ENCODE measurements at regions of chr15 and their contacts with region 1.

Region 1: DNA sequence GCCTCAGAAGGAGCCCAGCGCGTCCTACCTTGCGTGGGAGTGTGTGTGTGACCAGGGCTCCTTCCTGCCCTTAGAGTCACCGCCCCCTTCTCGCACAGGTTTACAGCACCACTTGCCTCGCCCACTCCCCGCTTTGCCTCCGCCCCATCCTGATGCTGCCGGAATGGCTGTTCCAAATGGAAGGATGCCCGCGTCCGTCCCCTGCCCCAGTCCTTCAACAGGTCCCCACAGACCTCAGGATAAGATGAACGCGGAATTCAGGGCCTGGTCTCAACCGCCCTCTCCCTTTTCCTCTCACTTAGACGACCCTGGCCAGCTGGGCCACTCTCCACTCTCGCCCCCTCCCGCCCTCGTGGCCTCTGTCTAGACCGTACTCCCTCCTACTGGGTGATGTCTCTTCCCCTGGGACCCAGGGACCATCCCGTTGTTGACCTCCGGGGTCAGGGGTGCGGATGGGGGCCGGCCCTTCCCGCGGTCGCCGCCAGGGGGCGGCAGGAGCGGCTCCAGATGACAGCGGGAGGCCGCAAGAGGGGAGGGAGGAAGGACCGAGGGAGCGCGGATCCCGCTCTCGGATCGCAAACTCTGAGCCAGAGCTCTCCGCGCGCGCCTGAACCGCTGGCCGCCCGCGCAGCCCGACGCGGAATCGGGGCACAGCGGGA is at the start of gene THSD4:
- DNase-seq: peak; percentile 73 to 89 (median 89)
- ATAC-seq: peak; percentile 70 to 75
- H3K4me3 ChIP-seq: peak within 1 kb of the TSS; percentile 81
- H3K27ac ChIP-seq: peak within 1 kb of the TSS; percentile 92
- H3K4me1 ChIP-seq: no peaks in the 10 kb centered on the region
- H3K27me3 ChIP-seq: no peaks in the 10 kb centered on the region
- total RNA-seq, gene THSD4: 63.6 to 93.8 (median 73.8) TPM

Region 2: DNA sequence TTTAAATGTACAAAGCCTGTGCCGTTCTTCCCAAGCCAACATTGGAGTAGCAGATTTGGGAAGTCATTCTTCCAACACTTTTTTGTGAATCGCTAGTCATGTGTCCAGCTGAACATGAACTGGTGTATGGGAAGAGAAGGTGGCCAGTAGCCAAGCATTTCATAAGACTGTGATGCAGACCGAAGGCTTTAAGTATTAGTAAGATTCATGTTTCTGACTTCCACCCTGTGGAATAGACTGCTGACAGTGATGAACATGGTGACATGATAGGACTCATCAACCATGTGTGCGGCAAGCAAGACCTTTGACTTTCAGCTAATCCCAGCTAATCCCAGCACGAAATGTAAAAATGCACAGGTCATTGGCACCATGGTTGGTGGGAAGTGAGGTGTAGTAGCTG is 48.0 kb before region 1 on chr15:
- intact Hi-C with region 1: no loop called
- DNase-seq: peak in 1 of 3 donors; percentile 22
- ATAC-seq: peak; percentile 55 to 56
- H3K4me3 ChIP-seq: no peak overlapping the region
- H3K27ac ChIP-seq: no peak overlapping the region
- H3K4me1 ChIP-seq: no peaks in the 10 kb centered on the region
- H3K27me3 ChIP-seq: no peaks in the 10 kb centered on the region

Region 3: DNA sequence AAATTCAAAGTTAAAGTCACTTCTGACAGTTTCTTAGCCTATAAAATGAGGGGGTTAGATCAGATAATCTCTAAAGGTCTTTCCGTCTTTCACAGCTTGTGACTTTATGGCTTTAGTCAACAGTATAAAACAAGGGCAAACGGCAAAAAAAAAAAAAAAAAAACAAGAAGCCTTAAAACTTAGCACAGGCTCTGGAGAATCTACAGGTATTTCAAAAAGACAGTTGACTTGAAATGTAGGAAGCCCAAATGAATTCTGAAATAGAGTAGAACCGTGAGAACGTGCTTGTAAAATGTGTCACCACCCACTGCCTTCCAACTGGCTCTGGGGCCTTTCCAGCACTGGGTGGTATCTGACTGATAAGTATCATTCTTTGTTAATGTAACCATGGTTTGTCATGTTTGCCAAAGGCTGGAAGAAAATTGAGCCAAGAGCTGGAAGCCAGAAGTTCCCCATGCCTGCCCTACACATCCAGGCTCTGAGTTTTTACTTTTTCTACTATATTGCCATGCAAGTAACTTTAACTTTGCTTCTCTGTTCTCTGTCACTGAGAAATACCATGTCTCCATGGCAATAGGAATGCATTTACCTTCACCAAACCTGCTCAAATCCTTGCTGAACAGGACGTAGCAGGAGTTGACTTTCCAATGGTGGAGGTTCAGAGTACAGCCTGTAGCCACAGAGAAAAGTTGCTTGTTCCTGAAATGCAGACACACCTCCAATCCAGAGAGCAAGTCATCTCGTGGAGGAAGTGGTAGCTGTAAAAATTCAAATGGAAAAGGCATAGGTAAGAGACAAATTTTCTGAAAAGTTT is 35.6 kb before region 1 on chr15:
- intact Hi-C with region 1: no loop called
- DNase-seq: peak; percentile 33 to 75 (median 55)
- ATAC-seq: peak; percentile 38 to 53
- H3K4me3 ChIP-seq: no peak overlapping the region
- H3K27ac ChIP-seq: no peak overlapping the region
- H3K4me1 ChIP-seq: no peaks in the 10 kb centered on the region
- H3K27me3 ChIP-seq: no peaks in the 10 kb centered on the region

Region 4: DNA sequence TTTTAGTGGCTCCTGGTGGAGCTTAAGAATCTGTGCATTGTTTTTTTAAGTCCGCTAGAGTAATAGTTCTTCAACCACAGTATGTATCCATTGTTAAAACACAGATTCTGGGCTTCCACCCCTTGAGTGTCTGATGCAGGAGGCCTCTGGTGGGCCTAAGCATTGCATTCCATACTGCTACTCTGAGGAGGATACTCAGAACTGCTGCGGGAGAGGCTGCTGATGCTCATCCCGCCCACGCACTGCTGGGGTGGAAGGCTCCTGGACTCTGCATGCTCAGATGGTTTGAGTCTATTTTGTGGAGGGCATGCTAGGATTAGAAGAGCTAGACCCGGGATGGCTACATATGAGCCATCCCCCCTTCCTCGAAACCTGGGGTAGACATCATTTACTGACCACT is 74.7 kb after region 1 on chr15:
- intact Hi-C with region 1: loop called in 1 of 4 experiments (anchors 10 kb)
- DNase-seq: no peak
- ATAC-seq: no peak
- H3K4me3 ChIP-seq: no peak overlapping the region
- H3K27ac ChIP-seq: no peak overlapping the region
- H3K4me1 ChIP-seq: no peaks in the 10 kb centered on the region
- H3K27me3 ChIP-seq: no peaks in the 10 kb centered on the region

Region 5: GRCh38 chr15:71437404-71438318 is 322.6 kb after region 1 on chr15:
- intact Hi-C with region 1: loop called (anchors 5 to 10 kb)
- DNase-seq: peak in 1 of 3 donors; percentile 31
- ATAC-seq: no peak
- H3K4me3 ChIP-seq: no peak overlapping the region
- H3K27ac ChIP-seq: no peak overlapping the region
- H3K4me1 ChIP-seq: no peaks in the 10 kb centered on the region
- H3K27me3 ChIP-seq: no peaks in the 10 kb centered on the region

Region 6: DNA sequence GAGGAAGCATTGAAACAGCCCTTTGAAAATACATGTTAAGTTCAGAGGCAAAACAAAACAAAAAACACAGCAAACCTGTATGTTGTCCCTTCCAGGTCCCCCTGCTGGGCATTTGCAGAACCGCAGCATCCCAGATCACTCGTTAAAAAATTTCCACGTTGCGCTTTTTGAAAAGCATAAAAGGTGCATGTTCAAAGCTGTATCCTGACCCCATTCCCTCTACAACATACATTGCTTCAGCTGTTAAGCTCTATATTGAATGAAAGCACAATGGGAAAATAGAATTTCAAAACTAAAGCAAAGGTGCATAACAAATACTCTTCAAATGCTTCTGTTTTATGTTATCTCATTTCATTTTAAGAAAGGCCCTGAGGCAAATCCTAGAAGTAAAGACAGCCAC is 328.5 kb after region 1 on chr15:
- intact Hi-C with region 1: loop called (anchors 5 to 10 kb)
- DNase-seq: peak; percentile 59 to 84 (median 73)
- ATAC-seq: no peak
- H3K4me3 ChIP-seq: no peak overlapping the region
- H3K27ac ChIP-seq: no peak overlapping the region
- H3K4me1 ChIP-seq: no peaks in the 10 kb centered on the region
- H3K27me3 ChIP-seq: no peaks in the 10 kb centered on the region